SK-N-SH (cell line): ENCODE measurements at regions of chrX and their contacts with region 1.

Region 1: GRCh38 chrX:133849676-133850075 is 135.7 kb downstream of the GPC3 start:
- DNase-seq: no peak
- H3K4me3 ChIP-seq: no peak overlapping the region
- H3K27ac ChIP-seq: no peak overlapping the region
- H3K4me1 ChIP-seq: no peaks in the 10 kb centered on the region
- H3K27me3 ChIP-seq: no peaks in the 10 kb centered on the region
- CTCF ChIP-seq: no peak
- EP300 ChIP-seq: no peak
- RAD21 ChIP-seq: no peak

Region 2: GRCh38 chrX:133598601-133599335 is 250.9 kb before region 1 on chrX:
- CTCF ChIA-PET with region 1: no interaction called
- POLR2A ChIA-PET with region 1: no interaction called
- DNase-seq: no peak
- H3K4me3 ChIP-seq: no peak overlapping the region
- H3K27ac ChIP-seq: no peak overlapping the region
- H3K4me1 ChIP-seq: no peaks in the 10 kb centered on the region
- H3K27me3 ChIP-seq: no peaks in the 10 kb centered on the region
- CTCF ChIP-seq: no peak
- EP300 ChIP-seq: no peak
- RAD21 ChIP-seq: no peak

Region 3: GRCh38 chrX:133838761-133839676 is 10.7 kb before region 1 on chrX:
- CTCF ChIA-PET with region 1: interaction called, 16 read pairs
- POLR2A ChIA-PET with region 1: no interaction called
- DNase-seq: peak; percentile 50
- H3K4me3 ChIP-seq: no peak overlapping the region; a peak in 1 of 4 replicates
- H3K27ac ChIP-seq: no peak overlapping the region
- H3K4me1 ChIP-seq: no peaks in the 10 kb centered on the region
- H3K27me3 ChIP-seq: no peaks in the 10 kb centered on the region; the same call in 1 of the 2 replicates
- CTCF ChIP-seq: peak; percentile 79
- EP300 ChIP-seq: no peak
- RAD21 ChIP-seq: peak; percentile 51